Naive thymus-derived CD8-positive, alpha-beta T cell (primary cell): ENCODE measurements at regions of chr6 and their contacts with region 1.

Region 1: DNA sequence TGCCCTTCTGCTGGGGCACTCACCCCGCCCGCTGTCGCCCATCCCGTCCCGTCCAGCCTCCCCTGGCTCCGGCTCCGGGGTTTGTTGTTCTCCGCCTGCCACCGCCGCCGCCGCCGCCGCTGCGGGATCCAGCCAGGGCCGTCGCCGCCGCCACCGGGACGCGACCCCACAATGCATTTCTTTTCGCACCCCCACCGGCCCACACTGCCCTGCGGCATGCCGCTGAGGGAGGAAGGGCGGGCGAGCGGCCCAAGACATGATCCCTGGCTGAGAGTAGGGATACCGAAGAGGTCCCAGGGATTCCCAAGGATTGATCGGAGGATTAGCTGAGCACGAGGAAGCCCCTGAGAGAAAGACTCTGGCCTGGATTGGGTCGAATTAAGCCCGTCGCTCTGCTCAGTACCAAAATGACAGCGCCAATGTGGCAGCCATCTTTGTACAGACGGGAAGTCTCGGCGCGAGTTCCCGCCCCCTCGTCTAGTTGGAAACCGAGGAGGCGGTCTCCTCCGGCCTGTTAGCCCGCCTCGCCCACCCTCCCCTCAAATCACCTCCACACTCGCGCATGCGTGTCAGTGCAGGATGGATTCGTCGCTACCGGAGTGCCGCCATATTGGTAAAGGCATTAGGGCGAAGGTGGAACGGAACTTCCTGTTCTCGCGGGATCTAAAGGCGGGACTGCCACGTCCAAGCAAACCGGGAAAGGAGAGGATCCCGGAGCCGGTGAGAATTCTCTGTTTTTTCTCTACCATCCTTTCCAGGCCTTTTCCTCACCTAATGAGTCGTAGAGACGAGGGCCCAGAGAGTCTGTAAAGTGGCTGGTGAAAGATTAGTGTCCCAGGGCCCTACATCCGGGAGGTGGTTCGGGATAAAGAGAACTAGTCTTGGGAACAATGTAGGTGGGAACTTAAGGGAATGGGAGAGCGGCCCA is at the starts of genes RXRB and SLC39A7:
- DNase-seq: peak; percentile 95 to 100 (median 99)
- ATAC-seq: peak; percentile 76 to 80
- H3K4me3 Mint-ChIP-seq: peak within 1 kb of the TSS; percentile 98 to 100 (median 99)
- H3K27ac Mint-ChIP-seq: peak within 1 kb of the TSS; percentile 95 to 100 (median 99)
- H3K4me1 Mint-ChIP-seq: peaks cover 48 to 85% (median 77%) of the 10 kb centered on the region in 4 donors
- H3K27me3 Mint-ChIP-seq: no peaks in the 10 kb centered on the region
- polyA plus RNA-seq, gene RXRB: 6.6 to 10.9 (median 7.3) TPM
- polyA plus RNA-seq, gene SLC39A7: 18.8 to 23.8 (median 21.8) TPM

Region 2: DNA sequence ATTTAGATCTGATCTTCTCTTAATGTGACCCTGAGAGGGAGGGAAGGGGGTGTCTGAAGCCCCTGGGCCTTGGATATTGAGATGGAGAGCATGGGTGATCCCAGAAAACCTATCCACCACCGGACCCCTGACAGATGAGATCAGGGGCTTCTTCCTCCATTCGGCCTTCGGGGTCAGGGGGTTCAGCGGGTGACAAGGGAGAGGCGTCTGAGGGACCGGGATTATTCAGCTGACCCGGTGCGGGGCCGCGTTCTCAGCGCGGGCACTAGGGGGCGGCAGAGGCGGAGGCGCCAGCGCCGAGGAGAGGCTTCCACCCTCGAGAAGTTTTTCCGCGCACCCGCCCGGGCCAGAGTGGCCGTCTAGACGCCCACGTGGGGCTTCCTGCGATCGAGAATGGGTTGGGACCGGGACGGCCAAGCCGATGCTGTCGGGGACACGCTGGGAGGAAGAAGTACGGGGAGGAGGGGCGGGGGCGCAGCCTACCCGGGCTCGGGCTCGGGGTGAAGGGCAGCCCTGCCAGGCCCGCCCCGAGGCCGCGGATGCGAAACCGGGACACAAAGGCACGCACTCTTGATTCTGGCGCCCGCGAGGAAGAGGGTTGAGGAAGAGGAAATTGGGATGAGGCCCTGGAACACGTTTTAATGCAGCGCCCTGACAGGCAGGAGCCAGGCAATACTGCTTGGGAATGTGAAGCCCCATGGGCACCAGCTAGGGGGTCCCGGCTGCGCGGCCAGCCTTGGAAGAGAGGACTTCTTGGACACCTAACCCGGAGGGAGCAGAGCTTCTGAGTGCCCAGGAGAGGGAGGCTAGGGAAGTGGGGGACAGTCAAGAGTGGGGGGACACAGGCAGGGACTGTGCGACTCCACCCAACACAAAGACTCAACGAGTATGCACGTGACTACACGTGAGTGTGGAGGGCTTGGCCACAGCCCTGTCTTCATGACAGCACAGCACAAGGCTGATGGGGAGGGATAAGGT is 38.8 kb before region 1 on chr6:
- POLR2A ChIA-PET with region 1: interaction called, 11 read pairs
- DNase-seq: peak; percentile 62 to 88 (median 81)
- ATAC-seq: peak; percentile 96 to 98
- H3K4me3 Mint-ChIP-seq: peak overlapping the region; percentile 84 to 96 (median 88)
- H3K27ac Mint-ChIP-seq: peak overlapping the region; percentile 34 to 92 (median 71)
- H3K4me1 Mint-ChIP-seq: peaks cover 5 to 14% (median 12%) of the 10 kb centered on the region in 4 donors
- H3K27me3 Mint-ChIP-seq: peaks cover 0 to 3% (median 0%) of the 10 kb centered on the region in 5 donors

Region 3: GRCh38 chr6:33183071-33183683 is 17.3 kb before region 1 on chr6:
- POLR2A ChIA-PET with region 1: interaction called, 19 read pairs
- DNase-seq: peak in 1 of 10 donors; percentile 26
- ATAC-seq: peak; percentile 25 to 50
- H3K4me3 Mint-ChIP-seq: peak overlapping the region; percentile 51 to 76 (median 65)
- H3K27ac Mint-ChIP-seq: peak overlapping the region; percentile 46 to 97 (median 87)
- H3K4me1 Mint-ChIP-seq: peaks cover 22 to 34% (median 26%) of the 10 kb centered on the region in 4 donors
- H3K27me3 Mint-ChIP-seq: peaks cover 5 to 14% (median 11%) of the 10 kb centered on the region in 5 donors

Region 4: GRCh38 chr6:33317669-33318425 is 117.4 kb after region 1 on chr6 and contains the start of gene ZBTB22:
- POLR2A ChIA-PET with region 1: no interaction called
- DNase-seq: peak; percentile 89 to 98 (median 94)
- ATAC-seq: peak; percentile 59 to 62
- H3K4me3 Mint-ChIP-seq: peak within 1 kb of the TSS in 9 of 10 donors; percentile 96 to 100 (median 99)
- H3K27ac Mint-ChIP-seq: peak within 1 kb of the TSS; percentile 95 to 100 (median 98)
- H3K4me1 Mint-ChIP-seq: peaks cover 36 to 87% (median 79%) of the 10 kb centered on the region in 4 donors
- H3K27me3 Mint-ChIP-seq: no peaks in the 10 kb centered on the region
- polyA plus RNA-seq, gene ZBTB22: 10.4 to 13.4 (median 10.7) TPM